ENCODE measurements at regions of chr18 and their contacts with region 1.

Region 1: DNA sequence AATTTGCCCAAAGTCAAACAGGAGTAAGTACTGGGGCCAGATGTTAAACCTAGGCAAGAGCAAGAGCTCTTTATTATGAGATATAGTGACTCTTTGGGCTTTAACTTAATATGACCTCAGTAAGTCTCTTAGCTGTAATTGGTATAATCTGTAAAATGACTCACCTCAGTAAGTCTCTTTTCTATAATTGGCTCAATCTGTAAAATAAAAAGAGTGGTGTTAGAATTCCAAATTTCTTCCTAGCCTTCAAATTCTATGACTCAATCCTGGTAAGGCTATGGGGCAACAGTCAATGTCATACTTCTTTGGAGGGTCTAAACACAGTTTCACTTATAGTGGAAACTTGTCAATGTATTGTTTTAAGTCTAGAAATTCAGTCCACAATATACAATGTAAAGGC is 1608.9 kb upstream of the PIK3C3 start:
- DNase-seq: no peak
- ATAC-seq: no peak
- H3K4me3 ChIP-seq: no peak overlapping the region
- H3K27ac ChIP-seq: no peak overlapping the region
- H3K4me1 ChIP-seq: no peaks in the 10 kb centered on the region
- H3K27me3 ChIP-seq: no peaks in the 10 kb centered on the region
- CTCF ChIP-seq: no peak

Region 2: GRCh38 chr18:40292985-40293710 is 53.0 kb before region 1 on chr18:
- intact Hi-C with region 1: loop called in 1 of 10 experiments (anchors 5 kb)
- DNase-seq: no peak
- ATAC-seq: no peak
- H3K4me3 ChIP-seq: no peak overlapping the region
- H3K27ac ChIP-seq: no peak overlapping the region
- H3K4me1 ChIP-seq: no peaks in the 10 kb centered on the region
- H3K27me3 ChIP-seq: no peaks in the 10 kb centered on the region
- CTCF ChIP-seq: peak in 4 of 9 donors; percentile 24 to 40 (median 32)

Region 3: GRCh38 chr18:40407909-40408308 is 61.8 kb after region 1 on chr18:
- intact Hi-C with region 1: loop called in 1 of 10 experiments (anchors 10 kb)
- DNase-seq: no peak
- ATAC-seq: no peak
- H3K4me3 ChIP-seq: no peak overlapping the region
- H3K27ac ChIP-seq: no peak overlapping the region
- H3K4me1 ChIP-seq: no peaks in the 10 kb centered on the region
- H3K27me3 ChIP-seq: no peaks in the 10 kb centered on the region
- CTCF ChIP-seq: no peak

Measured in heart right ventricle (tissue), 16 donors.